Activated B cell treated with CpG ODN at 0.5 μM for 24 hours (primary cell): ENCODE measurements at regions of chr22 and their contacts with region 1.

Region 1: DNA sequence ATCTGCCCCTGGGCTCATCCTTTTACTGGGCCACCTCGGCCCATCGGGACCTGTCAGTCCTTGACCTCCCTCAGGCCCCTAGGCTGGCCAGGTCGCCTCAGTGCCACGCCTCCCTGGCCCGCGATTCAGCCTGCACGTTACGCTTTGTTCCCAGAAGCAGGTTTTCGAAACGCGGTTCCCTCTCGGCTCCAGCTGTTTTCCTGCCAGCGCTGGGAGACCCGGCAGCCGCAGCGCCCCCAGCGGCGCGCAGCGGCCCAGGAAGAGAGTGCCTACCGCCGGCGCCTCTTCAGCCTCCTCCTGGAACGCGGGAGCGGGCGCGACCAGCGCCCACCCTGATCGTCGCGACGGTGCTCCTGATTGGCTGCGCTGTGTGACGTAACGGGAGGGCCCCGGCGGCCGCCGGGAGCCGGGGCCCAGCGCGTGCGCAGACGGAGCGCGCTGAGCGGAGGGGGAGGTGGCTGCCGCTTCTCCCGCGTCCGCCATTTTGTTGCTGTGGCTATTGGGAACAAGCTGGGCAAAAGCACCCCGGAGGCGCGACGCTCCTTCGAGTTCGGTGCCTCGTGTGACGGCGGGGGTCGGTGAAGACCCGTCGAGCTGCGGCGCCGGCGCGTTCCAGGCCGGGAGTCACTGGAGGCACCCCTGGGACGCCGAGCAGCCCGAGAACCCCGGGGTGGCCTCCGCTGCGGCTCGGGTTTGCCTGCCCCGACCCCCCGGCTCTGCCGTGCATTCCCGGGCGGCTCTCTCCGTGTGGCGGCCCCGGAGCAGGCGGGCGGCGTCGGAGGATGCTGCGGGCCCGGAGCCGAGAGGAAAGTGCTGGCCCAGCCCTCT is at the start of gene CRKL:
- DNase-seq: peak; percentile 89
- ATAC-seq: peak; percentile 97
- H3K4me3 Mint-ChIP-seq: peak within 1 kb of the TSS; percentile 97
- H3K27ac Mint-ChIP-seq: peak within 1 kb of the TSS; percentile 94
- H3K4me1 Mint-ChIP-seq: peaks cover 45% of the 10 kb centered on the region
- H3K27me3 Mint-ChIP-seq: no peaks in the 10 kb centered on the region
- CTCF ChIP-seq: peak; percentile 66
- total RNA-seq, gene CRKL: 51.1 and 55.7 TPM in 2 replicates

Region 2: DNA sequence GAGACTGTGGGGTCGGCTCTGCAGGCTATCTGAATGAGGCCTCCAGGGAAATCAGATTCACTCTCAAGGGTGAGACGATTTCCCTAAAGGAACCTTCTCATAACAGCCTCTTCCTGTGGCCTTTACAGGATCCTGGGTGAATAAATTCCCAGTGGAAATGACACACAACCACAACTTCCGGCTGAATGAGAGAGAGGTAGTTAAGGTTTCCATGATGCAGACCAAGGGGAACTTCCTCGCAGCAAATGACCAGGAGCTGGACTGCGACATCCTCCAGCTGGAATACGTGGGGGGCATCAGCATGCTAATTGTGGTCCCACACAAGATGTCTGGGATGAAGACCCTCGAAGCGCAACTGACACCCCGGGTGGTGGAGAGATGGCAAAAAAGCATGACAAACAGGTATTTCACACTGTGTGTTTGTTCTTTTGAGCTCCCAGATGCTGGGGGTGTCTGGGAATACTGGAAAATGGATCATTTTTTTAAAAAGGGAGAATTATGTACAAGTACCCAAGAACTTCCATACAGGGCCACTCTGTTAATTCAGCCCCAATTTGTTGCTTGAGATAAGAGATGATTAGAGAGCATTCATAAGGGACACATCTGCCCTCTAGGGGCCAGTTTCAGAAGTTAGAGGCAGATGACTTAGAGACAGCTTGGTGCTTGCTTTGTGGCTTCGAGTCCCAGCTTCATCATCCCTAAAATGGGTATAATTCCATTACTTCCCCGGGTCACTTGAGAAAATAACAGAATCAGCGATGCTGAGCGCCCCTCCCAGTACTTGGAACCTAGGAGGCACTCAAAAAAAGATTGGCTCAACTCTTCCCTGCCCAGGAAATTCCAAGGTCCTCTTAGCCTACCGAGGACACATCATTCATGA is 133.1 kb before region 1 on chr22:
- CTCF ChIA-PET with region 1: no interaction called
- POLR2A ChIA-PET with region 1: no interaction called
- intact Hi-C with region 1: no loop called
- DNase-seq: no peak
- ATAC-seq: peak; percentile 85
- H3K4me3 Mint-ChIP-seq: peak overlapping the region; percentile 32
- H3K27ac Mint-ChIP-seq: peak overlapping the region; percentile 30
- H3K4me1 Mint-ChIP-seq: peaks cover 16% of the 10 kb centered on the region
- H3K27me3 Mint-ChIP-seq: no peaks in the 10 kb centered on the region
- CTCF ChIP-seq: no peak

Region 3: GRCh38 chr22:20858615-20859416 is 58.4 kb before region 1 on chr22 and contains the starts of genes PI4KA and SNAP29:
- CTCF ChIA-PET with region 1: no interaction called
- POLR2A ChIA-PET with region 1: no interaction called
- intact Hi-C with region 1: loop called (anchors 1 kb)
- DNase-seq: peak; percentile 97
- ATAC-seq: peak; percentile 93
- H3K4me3 Mint-ChIP-seq: peak within 1 kb of the TSS; percentile 89
- H3K27ac Mint-ChIP-seq: peak within 1 kb of the TSS; percentile 80
- H3K4me1 Mint-ChIP-seq: peaks cover 46% of the 10 kb centered on the region
- H3K27me3 Mint-ChIP-seq: no peaks in the 10 kb centered on the region
- CTCF ChIP-seq: no peak
- total RNA-seq, gene PI4KA: 101 and 114 TPM in 2 replicates
- total RNA-seq, gene SNAP29: 22.1 and 23.6 TPM in 2 replicates

Region 4: GRCh38 chr22:20957316-20958101 is 40.3 kb after region 1 on chr22:
- CTCF ChIA-PET with region 1: interaction called, 3 read pairs
- POLR2A ChIA-PET with region 1: no interaction called
- intact Hi-C with region 1: loop called (anchors 5 kb)
- DNase-seq: no peak
- ATAC-seq: peak; percentile 59
- H3K4me3 Mint-ChIP-seq: peak overlapping the region; percentile 83
- H3K27ac Mint-ChIP-seq: no peak overlapping the region
- H3K4me1 Mint-ChIP-seq: peaks cover 18% of the 10 kb centered on the region
- H3K27me3 Mint-ChIP-seq: peaks cover 6% of the 10 kb centered on the region
- CTCF ChIP-seq: no peak

Region 5: GRCh38 chr22:20981787-20982562 is 64.8 kb after region 1 on chr22 and contains the start of gene LZTR1:
- CTCF ChIA-PET with region 1: no interaction called
- POLR2A ChIA-PET with region 1: interaction called, 12 read pairs
- intact Hi-C with region 1: no loop called
- DNase-seq: peak; percentile 74
- ATAC-seq: peak; percentile 80
- H3K4me3 Mint-ChIP-seq: peak within 1 kb of the TSS; percentile 93
- H3K27ac Mint-ChIP-seq: peak within 1 kb of the TSS; percentile 88
- H3K4me1 Mint-ChIP-seq: peaks cover 31% of the 10 kb centered on the region
- H3K27me3 Mint-ChIP-seq: no peaks in the 10 kb centered on the region
- CTCF ChIP-seq: no peak
- total RNA-seq, gene LZTR1: 79.2 and 89.3 TPM in 2 replicates

Region 6: GRCh38 chr22:21599053-21599893 is 682.1 kb after region 1 on chr22:
- CTCF ChIA-PET with region 1: no interaction called
- POLR2A ChIA-PET with region 1: no interaction called
- intact Hi-C with region 1: no loop called
- DNase-seq: no peak
- ATAC-seq: no peak
- H3K4me3 Mint-ChIP-seq: no peak overlapping the region
- H3K27ac Mint-ChIP-seq: no peak overlapping the region
- H3K4me1 Mint-ChIP-seq: peaks cover 26% of the 10 kb centered on the region
- H3K27me3 Mint-ChIP-seq: no peaks in the 10 kb centered on the region
- CTCF ChIP-seq: no peak